Adrenal gland (tissue), 19 donors: ENCODE measurements at regions of chr12 and their contacts with region 1.

Region 1: GRCh38 chr12:48618541-48618940 is 48.7 kb upstream of the LALBA start:
- DNase-seq: peak; percentile 65 to 89 (median 80)
- H3K4me3 ChIP-seq: no peak overlapping the region
- H3K27ac ChIP-seq: no peak overlapping the region
- H3K4me1 ChIP-seq: no peaks in the 10 kb centered on the region
- H3K27me3 ChIP-seq: peaks cover 9% of the 10 kb centered on the region
- CTCF ChIP-seq: peak; percentile 90 to 98 (median 94)
- POLR2A ChIP-seq: no peak

Region 2: DNA sequence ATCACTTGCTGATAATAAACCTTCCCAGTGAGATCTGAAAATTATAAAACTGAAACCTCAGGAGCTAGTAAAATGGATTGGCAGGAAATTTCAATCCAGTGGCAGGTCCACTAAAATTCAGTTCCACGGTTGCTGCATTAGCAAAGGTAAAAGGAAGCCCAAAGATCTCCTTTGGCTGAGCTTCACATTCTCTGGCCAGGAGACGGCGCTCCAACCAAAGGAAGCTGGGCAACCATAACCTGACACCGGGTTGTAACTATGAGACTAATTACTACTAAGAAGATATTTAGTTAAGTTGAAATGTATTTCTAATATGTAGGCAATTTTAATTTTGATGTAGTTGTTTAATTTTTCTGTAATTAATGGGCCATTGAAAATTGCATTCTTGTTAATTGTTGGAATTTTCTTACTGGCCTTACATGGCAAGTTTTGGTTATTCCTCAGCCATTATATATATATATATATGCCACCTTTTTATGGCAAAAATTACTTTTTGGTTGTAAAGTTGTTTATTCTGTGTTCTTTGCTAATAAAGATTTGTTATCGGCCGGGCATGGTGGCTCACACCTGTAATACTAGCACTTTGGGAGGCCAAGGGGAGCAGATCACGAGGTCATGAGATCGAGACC is 76.1 kb before region 1 on chr12:
- intact Hi-C with region 1: loop called (anchors 5 to 10 kb)
- DNase-seq: peak; percentile 24 to 62 (median 32)
- H3K4me3 ChIP-seq: no peak overlapping the region
- H3K27ac ChIP-seq: no peak overlapping the region
- H3K4me1 ChIP-seq: no peaks in the 10 kb centered on the region
- H3K27me3 ChIP-seq: peaks cover 4% of the 10 kb centered on the region
- CTCF ChIP-seq: peak; percentile 33 to 72 (median 48)
- POLR2A ChIP-seq: no peak